Calu3 (cell line): ENCODE measurements at regions of chr1 and their contacts with region 1.

Region 1: GRCh38 chr1:235910357-235911299 is 43.9 kb upstream of the LYST start:
- DNase-seq: peak; percentile 88
- H3K4me3 Mint-ChIP-seq: peak overlapping the region; percentile 43
- H3K27ac Mint-ChIP-seq: peak overlapping the region; percentile 92
- H3K4me1 Mint-ChIP-seq: peaks cover 44% of the 10 kb centered on the region
- H3K27me3 Mint-ChIP-seq: no peaks in the 10 kb centered on the region
- CTCF ChIP-seq: no peak

Region 2: DNA sequence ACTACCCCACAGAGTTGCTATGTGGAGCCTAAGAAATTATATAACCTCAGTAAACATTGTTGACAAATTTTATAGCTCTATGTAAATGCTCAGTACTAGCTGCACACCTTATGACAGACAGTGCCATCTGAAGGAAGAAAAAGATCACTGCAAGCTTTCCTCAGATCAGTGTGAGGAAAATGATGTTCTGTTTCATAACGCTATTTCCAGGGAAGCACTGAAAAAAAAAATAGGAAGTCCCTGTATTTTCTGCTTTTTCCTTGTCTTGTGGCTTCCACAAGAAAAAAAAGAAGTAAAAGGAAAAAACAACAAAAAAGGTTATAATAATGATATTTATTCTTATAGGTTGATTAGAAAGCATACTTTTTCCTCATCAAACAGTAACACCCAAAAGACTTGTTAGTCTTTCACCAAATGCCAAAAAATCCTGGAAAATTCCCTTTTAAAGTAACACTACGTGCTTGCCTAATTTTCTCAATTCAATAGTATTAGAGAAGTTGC is 67.1 kb before region 1 on chr1:
- CTCF ChIA-PET with region 1: no interaction called
- intact Hi-C with region 1: no loop called
- DNase-seq: peak; percentile 20
- H3K4me3 Mint-ChIP-seq: no peak overlapping the region
- H3K27ac Mint-ChIP-seq: no peak overlapping the region
- H3K4me1 Mint-ChIP-seq: no peaks in the 10 kb centered on the region
- H3K27me3 Mint-ChIP-seq: no peaks in the 10 kb centered on the region
- CTCF ChIP-seq: peak; percentile 32

Region 3: DNA sequence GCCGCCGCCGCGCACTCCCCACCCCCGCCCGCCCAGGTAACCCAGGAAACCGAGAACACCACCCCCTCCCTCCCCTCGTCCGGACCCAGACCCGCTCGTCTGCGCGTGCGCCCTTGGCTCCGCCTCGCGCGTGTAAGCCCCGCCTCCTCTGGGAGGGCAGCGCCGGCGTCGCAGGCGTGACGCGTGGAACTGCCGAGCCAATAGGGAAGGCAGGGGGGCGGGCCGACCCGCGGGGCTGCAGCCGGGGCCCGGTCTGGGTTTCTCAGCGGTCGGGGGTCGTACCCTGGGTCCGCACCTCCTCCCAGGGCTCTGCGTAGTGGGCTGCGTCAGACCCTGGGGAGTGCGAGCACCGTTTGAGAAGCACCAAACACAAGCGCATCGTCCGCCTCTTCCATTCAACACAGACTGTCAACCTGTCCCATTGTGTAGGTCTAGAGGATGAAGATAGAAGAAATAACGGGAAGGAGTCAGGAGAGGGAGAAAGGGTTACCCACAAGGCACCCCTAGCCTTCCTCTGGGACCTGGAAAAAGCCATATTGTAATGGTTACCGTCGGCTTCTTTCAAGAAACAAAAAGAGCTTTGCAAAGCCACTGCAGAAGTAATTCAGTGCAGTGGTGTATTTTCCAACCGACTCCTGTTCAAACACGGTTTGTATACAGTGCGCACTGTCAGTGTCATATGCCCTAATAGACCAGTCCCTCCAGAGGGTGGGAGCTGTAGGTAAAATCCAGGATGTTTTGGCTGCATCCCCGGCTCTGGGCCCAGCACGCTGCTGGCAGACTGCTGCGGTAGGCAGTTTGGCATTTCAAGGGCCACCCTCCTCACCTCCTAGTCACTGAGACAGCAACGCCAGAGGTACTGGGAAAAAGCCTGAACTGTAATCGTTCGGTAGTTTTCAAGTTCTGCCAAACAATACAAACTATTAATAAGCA is 43.4 kb before region 1 on chr1:
- CTCF ChIA-PET with region 1: interaction called, 4 read pairs
- intact Hi-C with region 1: loop called (anchors 2 kb)
- DNase-seq: peak; percentile 99
- H3K4me3 Mint-ChIP-seq: peak overlapping the region; percentile 92
- H3K27ac Mint-ChIP-seq: peak overlapping the region; percentile 53
- H3K4me1 Mint-ChIP-seq: peaks cover 13% of the 10 kb centered on the region
- H3K27me3 Mint-ChIP-seq: no peaks in the 10 kb centered on the region
- CTCF ChIP-seq: no peak